AG04449 (cell line): ENCODE measurements at regions of chr12 and their contacts with region 1.

Region 1: DNA sequence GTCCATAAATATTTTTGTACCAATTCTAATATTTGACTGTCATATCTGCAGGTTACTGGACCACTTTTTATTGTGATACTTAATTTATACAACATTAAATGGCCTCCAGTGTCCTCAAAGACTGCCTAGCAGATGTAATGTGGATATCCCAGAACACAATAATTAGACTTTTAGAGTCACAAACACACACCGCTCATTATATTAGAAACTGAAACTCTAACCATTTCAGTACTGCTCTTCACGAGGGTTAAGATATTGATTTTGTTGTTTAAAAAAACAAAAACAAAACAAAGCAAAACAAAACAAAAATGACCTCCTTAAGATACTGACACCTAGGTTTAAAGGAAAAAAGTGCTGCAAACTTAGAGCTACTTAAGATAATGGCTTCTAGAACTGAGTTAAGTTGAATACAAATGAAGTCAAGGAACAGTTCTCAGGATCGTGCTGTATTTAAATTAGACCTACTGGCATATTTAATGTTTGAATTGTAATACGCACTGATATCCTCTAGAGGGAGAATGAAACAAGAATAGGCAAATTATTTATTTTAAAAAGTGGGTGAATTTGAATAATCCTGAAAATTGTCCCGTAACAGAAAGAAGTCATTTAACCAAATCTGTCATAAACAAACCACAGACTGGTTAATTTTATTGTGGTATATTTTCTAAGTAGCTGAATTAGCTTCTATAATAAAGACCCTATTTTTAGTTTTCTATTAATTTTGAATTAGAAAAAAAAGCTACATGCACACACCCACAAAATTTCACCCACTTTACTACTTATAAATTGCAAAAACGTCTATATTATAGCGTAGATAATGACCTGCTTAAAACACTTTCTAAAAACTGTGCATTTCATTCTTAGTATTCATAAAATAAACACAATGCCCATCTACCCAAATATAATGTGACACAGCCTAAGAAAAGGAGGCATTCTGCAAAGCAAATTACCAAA is 395.2 kb upstream of the DCN start:
- DNase-seq: no peak
- H3K4me3 ChIP-seq: peak overlapping the region; percentile 16
- CTCF ChIP-seq: peak; percentile 18

Region 2: GRCh38 chr12:91561958-91562875 is 15.6 kb before region 1 on chr12:
- CTCF ChIA-PET with region 1: interaction called, 33 read pairs
- POLR2A ChIA-PET with region 1: no interaction called
- DNase-seq: no peak
- H3K4me3 ChIP-seq: no peak overlapping the region
- CTCF ChIP-seq: no peak

Region 3: DNA sequence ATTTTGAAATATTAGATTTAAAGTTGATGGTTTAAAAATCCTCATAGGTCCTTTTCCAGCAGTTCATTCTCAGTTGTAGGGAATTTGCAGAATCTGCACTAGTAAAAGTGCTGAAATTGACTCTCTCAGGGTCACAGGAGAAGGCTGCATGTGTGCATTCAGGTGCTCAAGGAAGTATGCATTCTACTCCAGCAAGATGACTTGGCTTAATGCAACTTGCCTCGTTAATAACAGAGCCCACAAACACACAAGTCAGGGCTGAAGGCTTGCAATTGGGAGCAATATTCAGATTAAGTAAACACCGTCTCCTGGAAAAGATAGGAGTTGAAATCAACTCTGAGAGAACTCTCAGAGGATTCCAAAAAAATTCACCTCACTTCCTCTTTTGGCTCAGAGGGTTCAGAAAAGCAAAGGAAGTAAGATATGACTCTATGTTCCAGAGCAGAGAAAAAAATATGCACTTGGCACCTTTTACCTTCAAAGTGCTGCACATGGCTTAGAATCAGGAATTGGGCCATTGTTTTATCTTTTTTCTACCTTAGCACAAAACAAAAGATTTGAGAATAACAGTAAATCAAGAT is 11.1 kb after region 1 on chr12:
- CTCF ChIA-PET with region 1: interaction called, 14 read pairs
- POLR2A ChIA-PET with region 1: no interaction called
- DNase-seq: no peak
- H3K4me3 ChIP-seq: no peak overlapping the region
- CTCF ChIP-seq: no peak

Region 4: GRCh38 chr12:91601057-91601456 is 23.2 kb after region 1 on chr12:
- CTCF ChIA-PET with region 1: no interaction called
- POLR2A ChIA-PET with region 1: no interaction called
- DNase-seq: no peak
- H3K4me3 ChIP-seq: no peak overlapping the region
- CTCF ChIP-seq: no peak